Activated CD4-positive, alpha-beta memory T cell treated with anti-CD3 and anti-CD28 coated beads for 36 hours (primary cell): ENCODE measurements at regions of chr1 and their contacts with region 1.

Region 1: DNA sequence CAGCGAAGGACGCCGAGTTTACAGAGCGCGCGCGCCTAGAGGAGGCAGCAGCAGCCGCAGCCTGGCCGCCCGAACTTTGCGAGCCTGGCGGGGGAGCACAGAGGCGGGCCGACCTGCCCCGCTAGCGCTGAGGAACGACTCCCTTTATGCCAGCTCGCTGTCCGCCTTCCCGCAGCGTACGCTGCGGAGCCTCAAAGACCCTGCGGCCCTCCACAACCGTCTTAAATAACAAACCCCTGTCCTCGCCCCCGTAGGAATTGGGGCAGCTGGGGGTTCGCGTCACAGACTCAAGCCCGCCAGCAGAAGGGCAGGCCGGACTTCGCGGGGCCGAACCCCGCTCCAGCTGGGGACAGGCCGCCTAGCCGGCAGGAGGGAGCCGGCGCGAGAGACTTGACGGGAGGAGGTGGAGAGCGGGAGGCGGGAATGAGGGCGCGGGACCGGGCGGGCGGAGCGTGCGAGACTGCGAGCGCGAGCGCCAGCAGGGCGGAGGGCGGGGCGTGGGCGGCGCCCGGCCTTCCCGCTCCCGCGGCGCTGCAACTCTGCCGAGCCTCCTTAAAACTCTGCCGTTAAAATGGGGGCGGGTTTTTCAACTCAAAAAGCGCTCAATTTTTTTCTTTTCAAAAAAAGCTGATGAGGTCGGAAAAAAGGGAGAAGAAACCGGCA is 1.8 kb upstream of the CDKN2C start:
- DNase-seq: peak; percentile 86
- H3K4me3 Mint-ChIP-seq: peak overlapping the region; percentile 88
- H3K27ac Mint-ChIP-seq: peak overlapping the region; percentile 97
- H3K4me1 Mint-ChIP-seq: peaks cover 26% of the 10 kb centered on the region
- H3K27me3 Mint-ChIP-seq: peaks cover 12% of the 10 kb centered on the region

Region 2: GRCh38 chr1:50929376-50929958 is 38.8 kb before region 1 on chr1:
- CTCF ChIA-PET with region 1: interaction called, 20 read pairs
- POLR2A ChIA-PET with region 1: no interaction called
- intact Hi-C with region 1: loop called (anchors 2 kb)
- DNase-seq: no peak
- H3K4me3 Mint-ChIP-seq: no peak overlapping the region
- H3K27ac Mint-ChIP-seq: no peak overlapping the region
- H3K4me1 Mint-ChIP-seq: peaks cover 26% of the 10 kb centered on the region
- H3K27me3 Mint-ChIP-seq: no peaks in the 10 kb centered on the region

Region 3: GRCh38 chr1:50978144-50978851 is 10.0 kb after region 1 on chr1:
- CTCF ChIA-PET with region 1: interaction called, 7 read pairs
- POLR2A ChIA-PET with region 1: interaction called, 24 read pairs
- intact Hi-C with region 1: loop called (anchors 1 kb)
- DNase-seq: peak; percentile 34
- H3K4me3 Mint-ChIP-seq: peak overlapping the region; percentile 75
- H3K27ac Mint-ChIP-seq: no peak overlapping the region
- H3K4me1 Mint-ChIP-seq: peaks cover 22% of the 10 kb centered on the region
- H3K27me3 Mint-ChIP-seq: peaks cover 41% of the 10 kb centered on the region

Region 4: GRCh38 chr1:51119331-51119730 is 151.0 kb after region 1 on chr1:
- CTCF ChIA-PET with region 1: no interaction called
- POLR2A ChIA-PET with region 1: no interaction called
- intact Hi-C with region 1: no loop called
- DNase-seq: no peak
- H3K4me3 Mint-ChIP-seq: no peak overlapping the region
- H3K27ac Mint-ChIP-seq: no peak overlapping the region
- H3K4me1 Mint-ChIP-seq: peaks cover 3% of the 10 kb centered on the region
- H3K27me3 Mint-ChIP-seq: peaks cover 1% of the 10 kb centered on the region